CD8-positive, alpha-beta T cell (primary cell): ENCODE measurements at regions of chr14 and their contacts with region 1.

Region 1: GRCh38 chr14:95561001-95561412 is 26.2 kb downstream of the GLRX5 start:
- DNase-seq: peak; percentile 62 to 88 (median 84)
- ATAC-seq: peak; percentile 88
- H3K4me3 ChIP-seq: no peak overlapping the region
- H3K4me3 Mint-ChIP-seq: no peak overlapping the region
- H3K27ac ChIP-seq: no peak overlapping the region
- H3K27ac Mint-ChIP-seq: no peak overlapping the region
- H3K4me1 ChIP-seq: no peaks in the 10 kb centered on the region
- H3K4me1 Mint-ChIP-seq: peaks cover 4% of the 10 kb centered on the region
- H3K27me3 ChIP-seq: no peaks in the 10 kb centered on the region
- H3K27me3 Mint-ChIP-seq: peaks cover 5% of the 10 kb centered on the region
- CTCF ChIP-seq: peak; percentile 86

Region 2: GRCh38 chr14:95774265-95775160 is 213.5 kb after region 1 on chr14:
- CTCF ChIA-PET with region 1: interaction called, 10 read pairs
- POLR2A ChIA-PET with region 1: no interaction called
- intact Hi-C with region 1: loop called in 1 of 2 experiments (anchors 1 kb)
- DNase-seq: peak; percentile 7 to 66 (median 48)
- ATAC-seq: no peak
- H3K4me3 ChIP-seq: no peak overlapping the region
- H3K4me3 Mint-ChIP-seq: no peak overlapping the region
- H3K27ac ChIP-seq: no peak overlapping the region
- H3K27ac Mint-ChIP-seq: no peak overlapping the region
- H3K4me1 ChIP-seq: no peaks in the 10 kb centered on the region
- H3K4me1 Mint-ChIP-seq: peaks cover 1% of the 10 kb centered on the region
- H3K27me3 ChIP-seq: no peaks in the 10 kb centered on the region
- H3K27me3 Mint-ChIP-seq: peaks cover 18% of the 10 kb centered on the region
- CTCF ChIP-seq: peak; percentile 89

Region 3: GRCh38 chr14:96117100-96117897 is 556.3 kb after region 1 on chr14:
- CTCF ChIA-PET with region 1: no interaction called
- POLR2A ChIA-PET with region 1: no interaction called
- intact Hi-C with region 1: no loop called
- DNase-seq: peak in 2 of 9 experiments; percentile 11 to 49
- ATAC-seq: no peak
- H3K4me3 ChIP-seq: no peak overlapping the region
- H3K4me3 Mint-ChIP-seq: no peak overlapping the region
- H3K27ac ChIP-seq: no peak overlapping the region
- H3K27ac Mint-ChIP-seq: peak overlapping the region; percentile 58
- H3K4me1 ChIP-seq: peaks cover 15% of the 10 kb centered on the region
- H3K4me1 Mint-ChIP-seq: peaks cover 14% of the 10 kb centered on the region
- H3K27me3 ChIP-seq: no peaks in the 10 kb centered on the region
- H3K27me3 Mint-ChIP-seq: peaks cover 12% of the 10 kb centered on the region
- CTCF ChIP-seq: no peak